Dorsolateral prefrontal cortex (tissue), 120 donors: ENCODE measurements at regions of chr9 and their contacts with region 1.

Region 1: GRCh38 chr9:114662081-114662989 is 4.7 kb upstream of the TEX53 start:
- DNase-seq: peak in 6 of 10 donors; percentile 4 to 56 (median 42)
- H3K4me3 ChIP-seq: no peak overlapping the region
- H3K27ac ChIP-seq: no peak overlapping the region
- H3K27me3 ChIP-seq: peaks cover 0 to 3% (median 0%) of the 10 kb centered on the region in 45 donors
- CTCF ChIP-seq: peak; percentile 42 to 89 (median 80)

Region 2: DNA sequence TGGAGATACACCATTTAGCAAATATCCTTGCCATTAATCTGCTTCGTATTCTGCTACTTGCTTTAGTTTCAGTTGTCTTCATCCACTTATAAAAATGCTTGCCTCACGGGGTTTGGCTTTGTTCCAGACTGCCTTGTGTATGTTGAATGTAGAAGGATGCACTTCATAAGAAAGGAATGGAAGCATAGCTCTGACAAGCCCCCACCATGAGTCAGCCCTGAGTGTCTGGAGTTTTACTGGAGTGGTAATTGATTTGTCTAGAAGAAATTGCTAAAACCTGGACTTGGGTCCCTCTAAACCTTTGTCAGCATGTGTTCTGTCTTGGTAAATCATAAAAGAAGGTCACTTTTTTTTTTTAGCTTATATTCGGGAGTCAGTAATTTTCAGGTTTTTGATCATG is 15.1 kb after region 1 on chr9:
- intact Hi-C with region 1: no loop called
- DNase-seq: no peak
- H3K4me3 ChIP-seq: no peak overlapping the region
- H3K27ac ChIP-seq: no peak overlapping the region
- H3K27me3 ChIP-seq: no peaks in the 10 kb centered on the region
- CTCF ChIP-seq: no peak

Region 3: DNA sequence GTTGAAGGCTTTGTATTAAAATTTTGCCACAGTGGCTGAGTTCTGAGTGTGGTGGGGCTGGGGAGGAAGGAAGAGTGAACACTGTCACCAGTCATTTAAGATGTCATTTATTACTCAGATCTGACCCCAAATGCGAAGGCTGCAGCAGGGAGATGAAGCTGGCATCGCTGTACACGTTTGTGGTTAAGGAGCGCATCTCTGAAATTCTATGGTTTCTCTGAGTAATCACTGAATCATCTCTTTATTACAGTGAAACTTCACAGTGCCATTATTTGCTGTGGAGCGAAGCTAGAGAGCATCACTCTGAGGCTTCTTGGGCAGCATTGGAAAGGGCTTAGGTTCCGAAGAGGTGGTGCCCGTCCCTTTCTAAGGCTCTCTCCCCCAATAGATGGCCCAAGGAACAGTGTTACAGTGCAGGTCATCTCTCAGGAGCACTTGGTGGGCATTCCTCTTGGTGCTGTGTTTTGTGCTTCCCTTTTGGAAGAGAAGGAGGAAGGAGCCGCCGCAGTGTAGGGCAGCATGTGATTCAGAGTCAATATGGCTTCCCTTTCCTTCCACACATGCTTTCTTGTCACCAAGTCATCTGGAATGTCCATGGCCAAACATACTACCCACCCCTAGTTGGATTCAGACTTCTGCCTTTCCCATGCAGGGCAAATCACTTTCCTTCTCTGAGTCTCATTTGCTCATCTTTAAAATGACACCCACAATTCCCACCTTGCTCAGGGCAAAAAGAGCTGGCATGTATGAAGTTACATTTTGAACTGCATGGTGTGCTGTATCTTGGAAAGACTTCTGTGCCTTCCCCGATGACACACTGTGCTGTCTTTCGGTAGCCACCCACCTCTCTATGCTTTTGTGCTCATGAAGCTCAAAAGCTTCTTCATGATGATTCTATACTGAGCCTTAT is 29.0 kb after region 1 on chr9:
- intact Hi-C with region 1: no loop called
- DNase-seq: peak in 2 of 10 donors; percentile 14 to 32
- H3K4me3 ChIP-seq: no peak overlapping the region
- H3K27ac ChIP-seq: peak overlapping the region in 11 of 59 donors; percentile 14 to 67 (median 31)
- H3K27me3 ChIP-seq: no peaks in the 10 kb centered on the region
- CTCF ChIP-seq: no peak

Region 4: GRCh38 chr9:114738581-114739316 is 76.4 kb after region 1 on chr9:
- intact Hi-C with region 1: loop called in 1 of 2 experiments (anchors 5 kb)
- DNase-seq: peak in 7 of 10 donors; percentile 18 to 72 (median 55)
- H3K4me3 ChIP-seq: no peak overlapping the region
- H3K27ac ChIP-seq: no peak overlapping the region
- H3K27me3 ChIP-seq: peaks cover 0 to 3% (median 0%) of the 10 kb centered on the region in 45 donors
- CTCF ChIP-seq: peak; percentile 64 to 93 (median 82)